CD8-positive, alpha-beta memory T cell (primary cell): ENCODE measurements at regions of chr3 and their contacts with region 1.

Region 1: GRCh38 chr3:46496741-46497554 is 828 bp upstream of the RTP3 start:
- DNase-seq: peak in 4 of 5 donors; percentile 16 to 70 (median 26)
- H3K4me3 ChIP-seq: no peak overlapping the region
- H3K4me3 Mint-ChIP-seq: no peak overlapping the region
- H3K27ac ChIP-seq: no peak overlapping the region
- H3K27ac Mint-ChIP-seq: peak overlapping the region in 2 of 8 donors; percentile 33 to 60
- H3K4me1 ChIP-seq: peaks cover 5% of the 10 kb centered on the region
- H3K4me1 Mint-ChIP-seq: peaks cover 4 to 20% (median 19%) of the 10 kb centered on the region in 3 donors
- H3K27me3 ChIP-seq: no peaks in the 10 kb centered on the region
- H3K27me3 Mint-ChIP-seq: no peaks in the 10 kb centered on the region

Region 2: GRCh38 chr3:46558184-46559043 is 61.5 kb after region 1 on chr3:
- CTCF ChIA-PET with region 1: interaction called, 214 read pairs
- POLR2A ChIA-PET with region 1: no interaction called
- DNase-seq: peak; percentile 35 to 88 (median 68)
- H3K4me3 ChIP-seq: peak overlapping the region; percentile 56
- H3K4me3 Mint-ChIP-seq: peak overlapping the region; percentile 11 to 83 (median 71)
- H3K27ac ChIP-seq: no peak overlapping the region
- H3K27ac Mint-ChIP-seq: peak overlapping the region in 5 of 8 donors; percentile 21 to 54 (median 47)
- H3K4me1 ChIP-seq: peaks cover 11% of the 10 kb centered on the region
- H3K4me1 Mint-ChIP-seq: peaks cover 9 to 24% (median 24%) of the 10 kb centered on the region in 3 donors
- H3K27me3 ChIP-seq: no peaks in the 10 kb centered on the region
- H3K27me3 Mint-ChIP-seq: peaks cover 3 to 6% of the 10 kb centered on the region in 2 donors

Region 3: DNA sequence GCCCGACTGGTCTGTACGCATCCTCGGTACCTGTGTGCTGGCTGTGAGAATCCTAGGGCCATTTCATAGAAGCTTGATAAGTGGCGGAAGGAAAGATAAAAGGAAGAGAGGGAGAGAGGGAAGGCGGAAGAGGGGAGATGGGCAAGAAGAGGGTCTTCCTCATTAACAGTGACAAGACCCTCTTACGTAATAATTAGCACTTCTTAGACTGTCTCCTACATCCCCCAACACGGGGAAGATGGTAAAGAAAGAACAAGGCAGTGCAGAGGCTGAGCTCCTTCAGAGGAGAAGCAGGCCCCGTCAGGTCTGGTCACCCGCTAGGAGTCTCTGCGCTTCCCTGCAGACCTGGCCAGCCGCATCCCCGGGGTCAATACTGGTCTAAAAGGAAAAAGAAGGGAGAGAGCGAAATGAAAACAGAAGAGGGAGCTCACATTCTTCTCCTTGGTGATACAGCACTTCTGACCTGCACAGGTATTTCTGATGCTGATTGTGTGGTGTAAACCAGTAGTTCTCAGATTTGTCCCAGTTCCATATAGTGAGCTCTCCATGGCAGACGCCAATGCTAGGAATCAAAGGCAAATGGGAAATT is 96.4 kb after region 1 on chr3:
- CTCF ChIA-PET with region 1: no interaction called
- POLR2A ChIA-PET with region 1: no interaction called
- DNase-seq: no peak
- H3K4me3 ChIP-seq: no peak overlapping the region
- H3K4me3 Mint-ChIP-seq: no peak overlapping the region
- H3K27ac ChIP-seq: no peak overlapping the region
- H3K27ac Mint-ChIP-seq: no peak overlapping the region
- H3K4me1 ChIP-seq: no peaks in the 10 kb centered on the region
- H3K4me1 Mint-ChIP-seq: no peaks in the 10 kb centered on the region
- H3K27me3 ChIP-seq: no peaks in the 10 kb centered on the region
- H3K27me3 Mint-ChIP-seq: peaks cover 17 to 23% of the 10 kb centered on the region in 2 donors